ENCODE measurements at regions of chr19 and their contacts with region 1.

Region 1: GRCh38 chr19:48674921-48675824 is 2.4 kb upstream of the NTN5 start:
- DNase-seq: peak; percentile 86
- H3K4me3 Mint-ChIP-seq: peak overlapping the region; percentile 23
- H3K27ac Mint-ChIP-seq: no peak overlapping the region
- H3K4me1 Mint-ChIP-seq: peaks cover 5% of the 10 kb centered on the region
- H3K27me3 Mint-ChIP-seq: no peaks in the 10 kb centered on the region
- CTCF ChIP-seq: peak; percentile 70

Region 2: GRCh38 chr19:48646001-48646721 is 29.0 kb before region 1 on chr19 and contains the start of gene CA11:
- CTCF ChIA-PET with region 1: interaction called, 8 read pairs
- POLR2A ChIA-PET with region 1: interaction called, 3 read pairs
- intact Hi-C with region 1: loop called (anchors 1 kb)
- DNase-seq: peak; percentile 90
- H3K4me3 Mint-ChIP-seq: peak within 1 kb of the TSS; percentile 73
- H3K27ac Mint-ChIP-seq: peak within 1 kb of the TSS; percentile 4
- H3K4me1 Mint-ChIP-seq: peaks cover 24% of the 10 kb centered on the region
- H3K27me3 Mint-ChIP-seq: peaks cover 10% of the 10 kb centered on the region
- CTCF ChIP-seq: peak; percentile 89
- total RNA-seq, gene CA11: 2.6 and 2.9 TPM in 2 replicates

Region 3: DNA sequence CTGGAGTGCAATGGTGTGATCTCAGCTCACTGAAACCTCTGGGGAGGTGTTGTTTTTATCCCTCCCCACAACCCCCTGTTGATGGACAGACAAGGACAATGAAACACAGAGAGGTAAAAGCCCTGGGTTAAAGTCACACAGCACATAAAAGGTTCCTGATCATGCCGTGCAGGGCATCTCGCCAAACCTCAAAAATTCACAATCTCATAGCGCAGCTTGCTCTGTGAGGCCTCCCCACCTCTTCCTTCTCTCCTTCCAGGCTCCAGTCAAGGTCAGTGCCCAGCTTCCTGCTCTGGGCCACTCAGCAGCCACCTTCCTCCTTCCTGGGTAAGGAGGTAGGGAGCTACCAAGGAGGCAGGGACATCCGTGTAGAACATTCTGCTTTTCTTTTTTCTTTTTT is 22.9 kb after region 1 on chr19:
- CTCF ChIA-PET with region 1: interaction called, 11 read pairs
- POLR2A ChIA-PET with region 1: interaction called, 3 read pairs
- intact Hi-C with region 1: no loop called
- DNase-seq: peak; percentile 75
- H3K4me3 Mint-ChIP-seq: no peak overlapping the region
- H3K27ac Mint-ChIP-seq: peak overlapping the region; percentile 50
- H3K4me1 Mint-ChIP-seq: peaks cover 12% of the 10 kb centered on the region
- H3K27me3 Mint-ChIP-seq: no peaks in the 10 kb centered on the region
- CTCF ChIP-seq: no peak

Region 4: GRCh38 chr19:48713864-48714758 is 38.9 kb after region 1 on chr19:
- CTCF ChIA-PET with region 1: interaction called, 7 read pairs
- POLR2A ChIA-PET with region 1: interaction called, 4 read pairs
- intact Hi-C with region 1: loop called (anchors 5 kb)
- DNase-seq: peak; percentile 100
- H3K4me3 Mint-ChIP-seq: peak overlapping the region; percentile 89
- H3K27ac Mint-ChIP-seq: peak overlapping the region; percentile 91
- H3K4me1 Mint-ChIP-seq: peaks cover 19% of the 10 kb centered on the region
- H3K27me3 Mint-ChIP-seq: no peaks in the 10 kb centered on the region
- CTCF ChIP-seq: no peak

Region 5: DNA sequence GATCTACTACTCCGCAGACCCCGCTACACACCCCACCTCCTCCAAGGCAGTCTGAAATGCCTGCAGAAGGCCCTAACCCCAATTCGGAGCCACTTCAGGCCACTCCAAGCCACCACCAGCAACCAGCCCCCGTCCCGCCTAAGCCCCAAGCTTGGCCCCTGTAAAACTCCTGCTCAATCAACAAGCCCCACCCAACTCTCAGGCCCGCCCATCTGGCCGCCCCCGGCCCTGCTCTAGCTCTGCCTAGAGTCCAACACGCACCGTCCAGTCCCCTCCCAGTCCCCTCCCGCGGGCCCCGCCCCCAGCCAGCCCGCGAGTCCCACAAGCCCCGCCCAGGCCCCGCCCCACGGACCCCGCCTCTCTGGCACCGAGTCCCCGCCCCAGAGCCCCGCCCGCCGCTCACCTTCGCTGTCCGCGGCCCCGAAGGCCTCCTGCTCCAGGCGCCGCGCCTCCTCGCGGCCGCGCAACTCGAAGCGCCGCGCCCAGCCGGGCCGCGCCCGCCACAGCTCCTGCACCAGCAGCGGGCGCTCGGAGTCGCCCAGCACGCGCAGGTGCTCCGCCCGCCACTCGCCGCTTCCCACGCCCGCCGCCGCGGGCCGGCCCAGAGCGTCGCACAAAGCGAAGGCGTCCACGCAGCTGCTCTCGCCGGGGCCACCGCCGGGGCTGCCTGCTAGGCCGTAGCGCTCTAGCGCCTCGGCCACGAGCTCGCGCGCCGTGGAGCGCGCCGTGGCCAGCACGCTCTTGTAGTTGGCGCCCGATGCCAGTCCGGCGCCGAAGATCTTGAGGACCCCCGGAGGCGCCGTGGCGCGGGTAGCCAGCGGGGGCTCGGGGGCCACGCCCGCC is 63.6 kb after region 1 on chr19:
- CTCF ChIA-PET with region 1: interaction called, 5 read pairs
- POLR2A ChIA-PET with region 1: no interaction called
- intact Hi-C with region 1: loop called (anchors 1 kb)
- DNase-seq: peak; percentile 93
- H3K4me3 Mint-ChIP-seq: peak overlapping the region; percentile 66
- H3K27ac Mint-ChIP-seq: no peak overlapping the region
- H3K4me1 Mint-ChIP-seq: peaks cover 4% of the 10 kb centered on the region
- H3K27me3 Mint-ChIP-seq: no peaks in the 10 kb centered on the region
- CTCF ChIP-seq: peak; percentile 44

Measured in MCF 10A (cell line).